ENCODE measurements at regions of chr12 and their contacts with region 1.

Region 1: GRCh38 chr12:13534645-13535398 is 338.3 kb downstream of the EMP1 start:
- DNase-seq: no peak
- H3K4me3 ChIP-seq: 0 out of 2 replicates have a peak overlapping the region, but pooled peaks have one; percentile 26
- CTCF ChIP-seq: peak; percentile 92

Region 2: GRCh38 chr12:13278249-13278787 is 256.5 kb before region 1 on chr12:
- CTCF ChIA-PET with region 1: interaction called, 116 read pairs
- POLR2A ChIA-PET with region 1: no interaction called
- DNase-seq: no peak
- H3K4me3 ChIP-seq: no peak overlapping the region
- CTCF ChIP-seq: peak; percentile 96

Region 3: GRCh38 chr12:13362260-13362841 is 172.5 kb before region 1 on chr12:
- CTCF ChIA-PET with region 1: interaction called, 18 read pairs
- POLR2A ChIA-PET with region 1: no interaction called
- DNase-seq: no peak
- H3K4me3 ChIP-seq: no peak overlapping the region
- CTCF ChIP-seq: peak; percentile 80

Region 4: GRCh38 chr12:13523536-13524307 is 11.1 kb before region 1 on chr12:
- CTCF ChIA-PET with region 1: interaction called, 11 read pairs
- POLR2A ChIA-PET with region 1: no interaction called
- DNase-seq: no peak
- H3K4me3 ChIP-seq: no peak overlapping the region
- CTCF ChIP-seq: no peak

Region 5: DNA sequence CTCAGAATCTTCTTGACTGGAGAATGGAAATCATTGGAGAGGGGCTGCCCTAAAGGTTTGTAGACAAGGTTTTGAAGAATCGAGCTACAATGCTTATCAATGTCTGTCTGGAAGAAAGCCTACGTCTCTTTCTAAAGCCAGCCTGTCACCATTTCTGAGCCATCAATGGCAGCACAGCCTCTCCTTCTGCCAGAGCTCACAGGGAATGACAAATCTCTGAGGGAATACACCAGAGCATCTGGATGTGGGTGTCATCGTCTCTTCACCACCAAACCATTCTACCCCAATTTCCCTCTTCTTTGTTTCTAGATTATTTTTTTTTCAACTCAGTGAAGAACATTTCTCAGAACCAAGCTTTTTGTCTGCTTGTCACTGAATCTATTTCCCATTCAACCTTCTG is 11.4 kb after region 1 on chr12:
- CTCF ChIA-PET with region 1: interaction called, 29 read pairs
- POLR2A ChIA-PET with region 1: no interaction called
- DNase-seq: no peak
- H3K4me3 ChIP-seq: no peak overlapping the region
- CTCF ChIP-seq: no peak

Region 6: GRCh38 chr12:13941258-13942249 is 406.7 kb after region 1 on chr12:
- CTCF ChIA-PET with region 1: no interaction called
- POLR2A ChIA-PET with region 1: no interaction called
- DNase-seq: no peak
- H3K4me3 ChIP-seq: no peak overlapping the region
- CTCF ChIP-seq: no peak